Psoas muscle (tissue), 8 donors: ENCODE measurements at regions of chr2 and their contacts with region 1.

Region 1: DNA sequence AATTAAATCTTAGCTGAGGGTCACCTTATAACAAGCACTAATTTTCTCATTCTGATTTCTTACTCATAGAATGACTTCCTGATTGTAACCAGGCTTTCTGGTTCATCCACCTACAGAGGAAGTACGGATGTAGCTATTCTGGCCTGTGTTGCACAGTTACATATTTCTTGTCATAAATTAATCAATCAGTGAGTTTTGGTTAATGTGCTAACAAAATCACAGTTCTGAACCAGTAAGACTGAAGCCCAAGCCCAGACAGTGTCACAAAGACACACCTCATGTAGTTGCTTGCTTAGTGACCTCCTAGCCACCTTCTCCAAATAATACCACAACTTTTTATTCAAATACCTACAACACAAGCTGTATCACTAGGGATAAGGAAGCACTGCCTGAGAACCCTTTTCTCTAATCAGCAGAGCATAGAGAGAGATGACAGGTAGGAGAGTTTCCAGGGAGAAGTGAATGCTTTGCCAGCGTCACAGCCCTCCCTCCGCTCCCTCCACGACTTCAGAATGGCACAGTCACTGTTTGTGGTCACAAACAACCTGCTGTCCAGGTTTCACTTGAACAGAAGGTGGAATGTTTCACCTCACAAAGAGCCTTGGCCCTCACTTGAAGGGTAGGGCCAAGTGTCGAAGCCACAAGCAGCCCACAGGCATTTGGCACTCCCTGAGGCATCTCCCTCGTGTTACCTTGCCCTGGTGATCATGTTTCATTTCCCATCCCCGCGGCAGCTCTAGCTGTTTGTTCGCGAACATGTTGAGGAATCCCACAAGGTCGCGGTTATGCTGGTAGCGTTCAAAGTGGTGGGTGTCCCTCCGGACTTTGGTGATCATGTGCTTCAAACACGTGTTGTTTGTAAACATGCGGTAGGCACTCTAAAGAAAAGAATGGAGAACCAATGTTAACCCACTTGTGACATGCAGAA is 120.8 kb upstream of the STK17B start:
- DNase-seq: peak in 1 of 2 donors; percentile 27
- ATAC-seq: peak; percentile 33 to 93 (median 88)
- H3K4me3 ChIP-seq: no peak overlapping the region
- H3K27ac ChIP-seq: no peak overlapping the region
- H3K4me1 ChIP-seq: no peaks in the 10 kb centered on the region
- H3K27me3 ChIP-seq: no peaks in the 10 kb centered on the region
- CTCF ChIP-seq: no peak

Region 2: DNA sequence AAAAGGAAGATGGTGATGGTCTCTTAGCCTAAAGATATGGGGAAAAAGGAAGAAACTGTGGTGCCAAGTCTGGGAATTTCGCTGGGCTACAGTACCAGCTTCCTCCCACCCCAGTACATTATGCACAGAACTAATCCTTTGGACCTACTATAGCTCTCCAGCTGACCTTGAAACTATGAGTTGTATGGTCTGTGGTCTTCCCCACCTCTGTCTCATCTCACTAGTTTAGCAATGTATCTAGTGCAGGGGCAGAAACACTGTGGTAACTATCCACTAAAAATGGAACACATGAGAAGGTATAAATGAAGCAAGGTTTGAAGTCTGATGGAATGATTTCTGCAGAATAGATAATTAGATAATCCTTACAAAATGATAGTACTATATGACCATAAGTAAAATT is 156.9 kb after region 1 on chr2:
- intact Hi-C with region 1: loop called in 1 of 2 experiments (anchors 5 kb)
- DNase-seq: no peak
- ATAC-seq: no peak
- H3K4me3 ChIP-seq: no peak overlapping the region
- H3K27ac ChIP-seq: no peak overlapping the region
- H3K4me1 ChIP-seq: no peaks in the 10 kb centered on the region
- H3K27me3 ChIP-seq: no peaks in the 10 kb centered on the region
- CTCF ChIP-seq: no peak

Region 3: DNA sequence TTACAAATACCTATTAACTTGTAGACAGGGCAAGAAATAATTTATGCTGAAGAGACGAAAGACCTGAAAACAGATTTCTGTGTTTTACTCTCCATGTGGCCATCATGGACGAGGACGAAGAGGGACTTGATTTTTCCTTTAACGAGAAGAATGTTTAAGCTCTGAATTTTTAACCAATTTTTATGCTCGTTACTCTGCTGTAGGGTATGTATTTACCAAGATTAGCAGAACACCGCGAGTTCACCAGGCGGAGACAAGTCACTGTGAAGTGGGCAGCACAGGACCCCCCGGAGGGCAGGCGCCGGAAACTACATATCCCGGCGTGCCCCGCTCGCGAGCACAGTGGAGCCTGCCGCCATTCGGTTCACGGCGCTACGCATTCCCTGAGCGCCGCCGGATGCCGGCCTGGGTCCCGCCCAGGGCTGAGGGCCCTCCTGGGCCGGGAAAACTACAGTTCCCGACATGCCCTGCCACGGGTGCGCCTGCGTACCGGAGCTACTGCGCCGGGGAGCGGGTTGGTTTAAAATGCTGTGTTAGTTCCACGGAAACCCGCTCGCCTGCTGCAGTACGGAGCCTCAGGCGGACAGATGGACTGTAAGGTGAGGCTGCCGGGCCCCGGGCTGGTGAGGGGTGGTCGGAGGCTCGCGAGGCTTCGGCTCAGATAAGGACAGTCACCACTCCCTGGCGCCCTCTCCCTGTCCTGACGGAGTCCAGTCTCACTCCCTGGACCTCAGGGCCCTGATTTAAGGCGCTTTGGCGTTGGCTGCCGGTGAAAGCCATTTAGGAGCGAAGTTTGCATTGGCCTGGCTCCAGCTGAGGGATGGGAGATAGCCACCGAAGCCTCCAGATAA is 347.3 kb after region 1 on chr2 and contains the start of gene CCDC150:
- intact Hi-C with region 1: loop called in 1 of 2 experiments (anchors 10 kb)
- DNase-seq: peak; percentile 93 to 96
- ATAC-seq: peak; percentile 100
- H3K4me3 ChIP-seq: peak within 1 kb of the TSS; percentile 78
- H3K27ac ChIP-seq: peak within 1 kb of the TSS; percentile 34
- H3K4me1 ChIP-seq: no peaks in the 10 kb centered on the region
- H3K27me3 ChIP-seq: no peaks in the 10 kb centered on the region
- CTCF ChIP-seq: peak; percentile 12
- total RNA-seq, gene CCDC150: 0.36 to 1.4 (median 0.56) TPM in 3 of 4 donors, not detected in the other